Endothelial cell of umbilical vein (primary cell): ENCODE measurements at regions of chr21 and their contacts with region 1.

Region 1: DNA sequence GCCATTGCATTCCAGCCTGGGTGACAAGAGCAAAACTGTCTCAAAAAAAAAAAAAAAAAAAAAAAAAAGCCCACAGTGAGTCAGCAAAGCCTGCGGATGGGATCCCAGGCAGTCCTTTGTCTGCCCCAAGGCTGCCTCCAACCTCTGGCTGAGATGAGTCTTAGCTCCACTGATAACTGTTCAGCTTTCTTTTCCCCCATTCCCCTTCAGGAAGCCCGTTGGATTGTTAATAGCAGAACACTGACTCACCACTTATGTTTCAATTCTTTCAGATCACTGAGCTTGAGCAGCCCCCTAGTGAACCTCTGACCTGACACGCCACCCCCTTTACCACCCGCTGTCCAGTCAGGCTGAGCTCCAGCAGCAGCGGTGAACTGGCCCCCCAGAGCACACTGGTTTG is 57.5 kb downstream of the ERG start:
- DNase-seq: peak; percentile 89
- H3K4me3 ChIP-seq: no peak overlapping the region
- H3K27ac ChIP-seq: peak overlapping the region; percentile 73
- H3K4me1 ChIP-seq: peaks cover 66% of the 10 kb centered on the region
- H3K27me3 ChIP-seq: no peaks in the 10 kb centered on the region
- CTCF ChIP-seq: no peak
- POLR2A ChIP-seq: no peak

Region 2: GRCh38 chr21:38386967-38387366 is 53.8 kb before region 1 on chr21:
- CTCF ChIA-PET with region 1: no interaction called
- POLR2A ChIA-PET with region 1: no interaction called
- dilution Hi-C with region 1: no loop called
- intact Hi-C with region 1: loop called (anchors 5 kb)
- DNase-seq: no peak
- H3K4me3 ChIP-seq: no peak overlapping the region
- H3K27ac ChIP-seq: peak overlapping the region; percentile 65
- H3K4me1 ChIP-seq: peaks cover 46% of the 10 kb centered on the region
- H3K27me3 ChIP-seq: no peaks in the 10 kb centered on the region
- CTCF ChIP-seq: no peak
- POLR2A ChIP-seq: no peak

Region 3: GRCh38 chr21:38460171-38460742 is 19.5 kb after region 1 on chr21:
- CTCF ChIA-PET with region 1: interaction called, 5 read pairs
- POLR2A ChIA-PET with region 1: interaction called, 3 read pairs
- dilution Hi-C with region 1: no loop called
- intact Hi-C with region 1: loop called (anchors 1 kb)
- DNase-seq: peak; percentile 97
- H3K4me3 ChIP-seq: peak overlapping the region in 1 of 3 experiments; percentile 32
- H3K27ac ChIP-seq: peak overlapping the region; percentile 98
- H3K4me1 ChIP-seq: peaks cover 73% of the 10 kb centered on the region
- H3K27me3 ChIP-seq: no peaks in the 10 kb centered on the region
- CTCF ChIP-seq: no peak
- POLR2A ChIP-seq: peak; percentile 69

Region 4: GRCh38 chr21:38478782-38479181 is 38.0 kb after region 1 on chr21:
- CTCF ChIA-PET with region 1: interaction called, 7 read pairs
- POLR2A ChIA-PET with region 1: interaction called, 7 read pairs
- dilution Hi-C with region 1: no loop called
- intact Hi-C with region 1: loop called (anchors 1 kb)
- DNase-seq: no peak
- H3K4me3 ChIP-seq: no peak overlapping the region
- H3K27ac ChIP-seq: peak overlapping the region; percentile 99
- H3K4me1 ChIP-seq: peaks cover 94% of the 10 kb centered on the region
- H3K27me3 ChIP-seq: no peaks in the 10 kb centered on the region
- CTCF ChIP-seq: no peak
- POLR2A ChIP-seq: no peak

Region 5: GRCh38 chr21:38488640-38489270 is 48.0 kb after region 1 on chr21:
- CTCF ChIA-PET with region 1: interaction called, 5 read pairs
- POLR2A ChIA-PET with region 1: interaction called, 14 read pairs
- dilution Hi-C with region 1: no loop called
- intact Hi-C with region 1: loop called (anchors 2 kb)
- DNase-seq: peak; percentile 81
- H3K4me3 ChIP-seq: peak overlapping the region in 1 of 3 experiments; percentile 32
- H3K27ac ChIP-seq: peak overlapping the region; percentile 100
- H3K4me1 ChIP-seq: peaks cover 97% of the 10 kb centered on the region
- H3K27me3 ChIP-seq: no peaks in the 10 kb centered on the region
- CTCF ChIP-seq: no peak
- POLR2A ChIP-seq: no peak

Region 6: DNA sequence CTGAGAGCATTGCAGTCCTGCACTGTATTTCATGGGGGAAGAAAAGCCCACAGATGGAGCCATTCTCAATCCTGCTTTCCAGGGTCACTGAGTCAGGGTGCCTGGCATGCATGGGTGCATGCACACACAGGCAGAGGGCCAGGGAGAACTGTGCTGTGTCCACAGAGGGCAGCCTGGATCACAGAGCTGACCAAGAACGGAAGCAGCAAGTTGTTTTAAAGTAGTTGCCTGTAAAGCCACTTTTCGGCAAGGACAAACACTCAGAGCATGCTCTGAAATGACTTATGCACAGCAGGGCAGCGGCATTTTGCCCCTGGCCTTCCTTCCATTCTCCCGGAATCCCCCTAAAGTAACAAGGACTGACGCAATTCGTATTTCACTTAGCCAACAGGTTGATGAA is 54.0 kb after region 1 on chr21:
- CTCF ChIA-PET with region 1: interaction called, 8 read pairs
- POLR2A ChIA-PET with region 1: interaction called, 14 read pairs
- dilution Hi-C with region 1: no loop called
- intact Hi-C with region 1: loop called (anchors 2 kb)
- DNase-seq: peak; percentile 88
- H3K4me3 ChIP-seq: peak overlapping the region; percentile 84 to 100 (median 99)
- H3K27ac ChIP-seq: peak overlapping the region; percentile 100
- H3K4me1 ChIP-seq: peaks cover 63% of the 10 kb centered on the region
- H3K27me3 ChIP-seq: no peaks in the 10 kb centered on the region
- CTCF ChIP-seq: no peak
- POLR2A ChIP-seq: peak; percentile 86